Panc1 (cell line): ENCODE measurements at regions of chr15 and their contacts with region 1.

Region 1: DNA sequence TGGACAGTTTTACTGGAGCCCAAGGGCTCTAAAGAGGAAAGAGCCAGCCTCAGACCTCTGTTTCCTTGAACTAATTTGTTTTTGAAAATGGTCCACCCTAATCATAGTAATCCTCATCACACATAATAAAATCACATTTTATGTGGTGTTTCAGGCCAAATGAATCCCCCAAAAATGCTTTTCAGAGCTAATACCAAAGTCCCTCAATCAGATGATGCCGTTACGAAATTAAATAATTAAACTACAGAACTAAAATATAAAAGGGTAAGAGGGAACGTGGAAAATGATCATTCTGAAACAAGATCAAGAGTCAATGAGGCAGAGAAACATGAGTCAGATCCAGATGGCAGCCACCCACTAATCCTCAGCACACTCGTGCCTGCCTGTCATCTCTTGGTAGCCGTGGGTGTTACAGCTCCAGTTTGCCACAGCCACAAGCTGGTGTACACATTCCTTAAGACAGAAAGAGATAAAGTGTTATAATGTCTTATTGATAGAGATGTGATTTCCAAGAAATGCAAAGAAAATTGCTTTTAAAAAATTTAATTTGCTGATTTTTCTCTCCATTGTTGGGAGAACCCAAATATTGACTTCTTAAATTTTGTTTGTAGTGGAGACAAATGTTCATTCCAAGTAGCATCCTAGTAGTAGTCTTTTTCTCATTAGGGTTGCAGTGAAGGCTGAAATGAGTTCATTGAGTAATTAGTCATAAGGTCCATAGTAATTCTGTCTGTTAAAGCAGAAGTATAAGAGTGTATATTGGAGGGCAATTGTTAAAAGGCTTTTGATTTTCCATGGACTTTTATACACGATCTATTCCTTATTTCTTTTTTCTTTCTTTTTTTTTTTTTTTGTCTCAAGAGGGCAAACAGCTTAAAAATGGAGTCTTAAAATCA is 104.2 kb downstream of the AGBL1 start:
- DNase-seq: no peak
- ATAC-seq: no peak
- H3K4me3 ChIP-seq: no peak overlapping the region
- H3K27ac ChIP-seq: no peak overlapping the region
- H3K4me1 ChIP-seq: no peaks in the 10 kb centered on the region
- H3K27me3 ChIP-seq: no peaks in the 10 kb centered on the region
- CTCF ChIP-seq: no peak

Region 2: DNA sequence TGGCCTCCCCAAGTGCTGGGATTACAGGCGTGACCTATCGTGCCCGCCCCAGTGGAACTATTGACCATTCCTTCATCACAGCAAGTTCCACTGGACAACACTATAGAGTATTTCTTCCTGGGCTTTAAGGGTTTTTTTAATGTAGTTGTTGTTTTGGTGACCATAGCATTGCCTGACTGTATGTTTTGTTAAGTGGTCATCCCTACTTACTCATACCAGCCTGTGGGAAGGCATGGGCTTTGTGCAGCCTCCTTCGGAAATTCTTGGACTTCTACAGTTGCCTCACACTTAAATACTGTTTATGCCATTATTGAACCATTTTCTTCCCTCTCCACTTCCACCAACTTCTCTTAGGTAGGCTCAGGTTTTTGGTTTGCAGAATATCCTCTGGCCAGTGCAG is 1386.6 kb before region 1 on chr15:
- CTCF ChIA-PET with region 1: no interaction called
- POLR2A ChIA-PET with region 1: no interaction called
- in situ Hi-C with region 1: no loop called
- intact Hi-C with region 1: no loop called
- DNase-seq: no peak
- ATAC-seq: no peak
- H3K4me3 ChIP-seq: no peak overlapping the region
- H3K27ac ChIP-seq: no peak overlapping the region
- H3K4me1 ChIP-seq: no peaks in the 10 kb centered on the region
- H3K27me3 ChIP-seq: no peaks in the 10 kb centered on the region
- CTCF ChIP-seq: no peak

Region 3: GRCh38 chr15:85672332-85673084 is 511.3 kb before region 1 on chr15:
- CTCF ChIA-PET with region 1: no interaction called
- POLR2A ChIA-PET with region 1: no interaction called
- in situ Hi-C with region 1: no loop called
- intact Hi-C with region 1: no loop called
- DNase-seq: no peak
- ATAC-seq: no peak
- H3K4me3 ChIP-seq: no peak overlapping the region
- H3K27ac ChIP-seq: no peak overlapping the region
- H3K4me1 ChIP-seq: no peaks in the 10 kb centered on the region
- H3K27me3 ChIP-seq: no peaks in the 10 kb centered on the region
- CTCF ChIP-seq: no peak

Region 4: GRCh38 chr15:86162172-86162591 is 21.7 kb before region 1 on chr15:
- CTCF ChIA-PET with region 1: no interaction called
- POLR2A ChIA-PET with region 1: no interaction called
- in situ Hi-C with region 1: no loop called
- intact Hi-C with region 1: loop called (anchors 1 kb)
- DNase-seq: no peak
- ATAC-seq: no peak
- H3K4me3 ChIP-seq: no peak overlapping the region
- H3K27ac ChIP-seq: no peak overlapping the region
- H3K4me1 ChIP-seq: no peaks in the 10 kb centered on the region
- H3K27me3 ChIP-seq: 0 out of 2 replicates have a peak, but pooled peaks cover under 1% of the 10 kb centered on the region
- CTCF ChIP-seq: no peak

Region 5: GRCh38 chr15:86384186-86384585 is 200.3 kb after region 1 on chr15:
- CTCF ChIA-PET with region 1: no interaction called
- POLR2A ChIA-PET with region 1: no interaction called
- in situ Hi-C with region 1: no loop called
- intact Hi-C with region 1: no loop called
- DNase-seq: no peak
- ATAC-seq: no peak
- H3K4me3 ChIP-seq: no peak overlapping the region
- H3K27ac ChIP-seq: no peak overlapping the region
- H3K4me1 ChIP-seq: no peaks in the 10 kb centered on the region
- H3K27me3 ChIP-seq: no peaks in the 10 kb centered on the region; the same call in 1 of the 2 replicates
- CTCF ChIP-seq: no peak

Region 6: DNA sequence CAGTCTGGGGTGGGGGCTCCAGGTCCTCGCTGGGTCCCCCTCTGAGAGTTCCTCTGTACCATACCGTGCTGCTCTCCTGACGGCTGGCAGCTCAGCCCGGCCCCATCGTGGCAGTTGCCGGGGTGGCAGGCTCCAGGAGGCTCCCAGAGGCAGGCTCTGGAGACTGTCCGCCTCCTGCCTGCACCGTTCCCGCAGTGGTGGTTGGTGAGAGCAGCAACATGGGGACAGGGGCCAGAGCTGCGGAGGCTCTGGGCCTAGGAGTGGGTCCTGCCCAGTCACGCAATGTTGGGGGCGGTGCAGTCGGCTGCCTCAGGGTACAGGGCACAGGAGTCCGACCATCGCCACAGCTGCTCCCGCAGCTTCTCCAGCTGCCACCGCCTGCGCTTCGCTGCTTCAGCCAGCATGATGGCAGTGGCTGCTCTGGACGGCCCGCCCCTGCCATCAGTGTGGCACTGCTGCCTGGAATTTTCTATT is 388.6 kb after region 1 on chr15:
- CTCF ChIA-PET with region 1: no interaction called
- POLR2A ChIA-PET with region 1: no interaction called
- in situ Hi-C with region 1: no loop called
- intact Hi-C with region 1: no loop called
- DNase-seq: no peak
- ATAC-seq: peak; percentile 48; the same call in 1 of the 2 replicates
- H3K4me3 ChIP-seq: no peak overlapping the region
- H3K27ac ChIP-seq: no peak overlapping the region
- H3K4me1 ChIP-seq: no peaks in the 10 kb centered on the region
- H3K27me3 ChIP-seq: no peaks in the 10 kb centered on the region
- CTCF ChIP-seq: no peak

Region 7: DNA sequence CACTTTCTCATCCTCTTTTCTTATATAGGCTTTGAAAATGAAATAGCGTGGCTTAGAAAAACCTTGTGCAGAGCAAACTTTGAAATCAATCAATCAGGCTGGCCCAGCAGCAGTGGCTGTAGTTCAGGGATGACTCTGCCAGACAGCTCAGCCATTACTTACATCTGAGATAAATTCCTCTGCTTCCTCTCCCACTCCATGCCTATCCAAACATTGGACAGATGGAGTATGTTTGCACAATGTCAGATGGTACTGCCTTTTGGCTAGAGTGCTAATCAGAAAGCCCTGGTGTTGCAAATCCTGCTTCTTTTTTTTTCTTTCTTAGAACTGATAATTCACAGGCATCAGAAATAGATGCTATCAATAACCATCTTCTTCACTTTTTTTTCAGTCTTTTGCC is 960.9 kb after region 1 on chr15:
- CTCF ChIA-PET with region 1: no interaction called
- POLR2A ChIA-PET with region 1: interaction called, 10 read pairs
- in situ Hi-C with region 1: no loop called
- intact Hi-C with region 1: no loop called
- DNase-seq: no peak
- ATAC-seq: no peak
- H3K4me3 ChIP-seq: no peak overlapping the region
- H3K27ac ChIP-seq: no peak overlapping the region
- H3K4me1 ChIP-seq: no peaks in the 10 kb centered on the region
- H3K27me3 ChIP-seq: no peaks in the 10 kb centered on the region
- CTCF ChIP-seq: no peak